ENCODE measurements at regions of chr11 and their contacts with region 1.

Region 1: DNA sequence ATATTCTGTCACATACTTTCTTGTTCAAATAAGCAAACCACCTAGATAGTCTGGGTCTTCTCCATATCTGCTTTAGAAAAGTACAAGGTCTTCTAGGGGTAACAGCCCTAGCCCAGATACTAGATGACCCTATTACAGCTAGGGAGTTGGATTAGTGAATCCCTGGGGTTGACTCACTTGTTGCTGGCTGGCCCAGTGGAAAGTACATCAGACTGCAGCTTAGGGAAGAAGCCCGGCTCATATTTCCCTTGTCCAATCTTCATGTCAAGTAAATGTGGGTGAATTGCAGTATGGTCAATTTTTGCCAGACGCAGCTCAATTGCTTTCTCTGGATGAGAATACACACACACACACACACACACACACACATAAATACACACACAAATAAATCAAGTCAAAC is 79.1 kb upstream of the SCUBE2 start:
- DNase-seq: no peak
- ATAC-seq: no peak
- H3K4me3 ChIP-seq: no peak overlapping the region
- H3K4me3 Mint-ChIP-seq: no peak overlapping the region
- H3K27ac ChIP-seq: no peak overlapping the region
- H3K27ac Mint-ChIP-seq: peak overlapping the region in 1 of 9 donors; percentile 27
- H3K4me1 ChIP-seq: no peaks in the 10 kb centered on the region
- H3K4me1 Mint-ChIP-seq: peaks cover 0 to 37% (median 14%) of the 10 kb centered on the region in 7 donors
- H3K27me3 ChIP-seq: no peaks in the 10 kb centered on the region
- H3K27me3 Mint-ChIP-seq: no peaks in the 10 kb centered on the region

Region 2: DNA sequence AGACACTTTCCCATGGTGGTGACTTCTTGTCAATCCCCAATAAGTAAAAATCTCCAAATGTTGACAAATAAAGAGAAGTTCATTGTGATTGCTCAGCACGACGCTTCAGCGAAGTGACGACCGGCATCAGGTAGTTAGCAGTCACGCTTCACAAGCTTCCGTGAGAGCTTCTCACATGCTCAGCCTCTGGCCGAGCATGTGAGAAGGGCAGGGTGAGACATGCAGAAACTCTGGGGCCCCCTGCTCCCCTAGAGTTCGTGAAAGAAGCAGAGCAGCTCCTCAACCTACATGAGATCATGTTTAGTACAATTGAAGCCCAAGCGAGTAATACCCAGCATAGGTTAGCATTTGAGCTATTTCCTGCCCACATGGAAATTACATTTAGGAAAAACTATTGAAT is 233.3 kb before region 1 on chr11:
- CTCF ChIA-PET with region 1: no interaction called
- POLR2A ChIA-PET with region 1: no interaction called
- intact Hi-C with region 1: no loop called
- DNase-seq: no peak
- ATAC-seq: no peak
- H3K4me3 ChIP-seq: no peak overlapping the region
- H3K4me3 Mint-ChIP-seq: no peak overlapping the region
- H3K27ac ChIP-seq: no peak overlapping the region
- H3K27ac Mint-ChIP-seq: no peak overlapping the region
- H3K4me1 ChIP-seq: no peaks in the 10 kb centered on the region
- H3K4me1 Mint-ChIP-seq: peaks cover 0 to 8% (median 4%) of the 10 kb centered on the region in 7 donors
- H3K27me3 ChIP-seq: no peaks in the 10 kb centered on the region
- H3K27me3 Mint-ChIP-seq: peaks cover 0 to 11% (median 4%) of the 10 kb centered on the region in 5 donors

Region 3: GRCh38 chr11:8989453-8989852 is 181.0 kb before region 1 on chr11:
- CTCF ChIA-PET with region 1: interaction called, 10 read pairs
- POLR2A ChIA-PET with region 1: no interaction called
- intact Hi-C with region 1: no loop called
- DNase-seq: no peak
- ATAC-seq: no peak
- H3K4me3 ChIP-seq: no peak overlapping the region
- H3K4me3 Mint-ChIP-seq: no peak overlapping the region
- H3K27ac ChIP-seq: no peak overlapping the region
- H3K27ac Mint-ChIP-seq: no peak overlapping the region
- H3K4me1 ChIP-seq: no peaks in the 10 kb centered on the region
- H3K4me1 Mint-ChIP-seq: peaks cover 0 to 17% (median 0%) of the 10 kb centered on the region in 7 donors
- H3K27me3 ChIP-seq: no peaks in the 10 kb centered on the region
- H3K27me3 Mint-ChIP-seq: peaks cover 10 to 35% (median 17%) of the 10 kb centered on the region in 5 donors

Region 4: GRCh38 chr11:9285850-9286587 is 115.6 kb after region 1 on chr11:
- CTCF ChIA-PET with region 1: no interaction called
- POLR2A ChIA-PET with region 1: no interaction called
- intact Hi-C with region 1: loop called in 1 of 2 experiments (anchors 2 kb)
- DNase-seq: no peak
- ATAC-seq: no peak
- H3K4me3 ChIP-seq: no peak overlapping the region
- H3K4me3 Mint-ChIP-seq: no peak overlapping the region
- H3K27ac ChIP-seq: no peak overlapping the region
- H3K27ac Mint-ChIP-seq: no peak overlapping the region
- H3K4me1 ChIP-seq: peaks cover 0 to 2% of the 10 kb centered on the region in 2 donors
- H3K4me1 Mint-ChIP-seq: peaks cover 2 to 24% (median 17%) of the 10 kb centered on the region in 7 donors
- H3K27me3 ChIP-seq: no peaks in the 10 kb centered on the region
- H3K27me3 Mint-ChIP-seq: no peaks in the 10 kb centered on the region

Region 5: DNA sequence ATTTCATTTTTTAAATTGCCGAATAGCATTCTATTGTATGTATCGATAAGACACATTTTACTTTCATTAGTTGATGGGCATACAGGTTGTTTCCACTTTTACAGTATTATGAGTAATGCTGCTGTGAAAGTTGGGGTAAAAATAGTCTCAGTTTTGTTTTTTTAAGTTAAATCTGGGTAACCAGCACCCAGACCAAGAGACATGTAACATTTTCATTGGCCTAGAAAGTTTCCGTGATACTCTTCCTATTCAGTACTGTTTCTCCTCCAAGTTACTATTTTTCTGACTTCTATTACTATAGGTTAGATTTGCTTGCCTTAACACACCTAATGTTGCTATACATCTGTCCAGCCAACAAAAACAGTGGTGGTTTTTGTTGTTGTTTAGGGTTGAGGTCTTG is 226.3 kb after region 1 on chr11:
- CTCF ChIA-PET with region 1: interaction called, 4 read pairs
- POLR2A ChIA-PET with region 1: no interaction called
- intact Hi-C with region 1: loop called in 1 of 2 experiments (anchors 5 kb)
- DNase-seq: no peak
- ATAC-seq: no peak
- H3K4me3 ChIP-seq: no peak overlapping the region
- H3K4me3 Mint-ChIP-seq: peak overlapping the region in 5 of 10 donors; percentile 1 to 68 (median 10)
- H3K27ac ChIP-seq: no peak overlapping the region
- H3K27ac Mint-ChIP-seq: peak overlapping the region in 2 of 9 donors; percentile 3 to 11
- H3K4me1 ChIP-seq: peaks cover 8 to 13% of the 10 kb centered on the region in 2 donors
- H3K4me1 Mint-ChIP-seq: peaks cover 45 to 73% (median 60%) of the 10 kb centered on the region in 7 donors
- H3K27me3 ChIP-seq: no peaks in the 10 kb centered on the region
- H3K27me3 Mint-ChIP-seq: no peaks in the 10 kb centered on the region

Measured in naive thymus-derived CD4-positive, alpha-beta T cell (primary cell).